Left colon (tissue), 2 donors: ENCODE measurements at regions of chr1 and their contacts with region 1.

Region 1: GRCh38 chr1:223142795-223143536 is at the start of gene TLR5:
- DNase-seq: peak; percentile 87 to 93
- ATAC-seq: peak; percentile 96
- total RNA-seq, gene TLR5: 1.3 to 3.5 TPM

Region 2: DNA sequence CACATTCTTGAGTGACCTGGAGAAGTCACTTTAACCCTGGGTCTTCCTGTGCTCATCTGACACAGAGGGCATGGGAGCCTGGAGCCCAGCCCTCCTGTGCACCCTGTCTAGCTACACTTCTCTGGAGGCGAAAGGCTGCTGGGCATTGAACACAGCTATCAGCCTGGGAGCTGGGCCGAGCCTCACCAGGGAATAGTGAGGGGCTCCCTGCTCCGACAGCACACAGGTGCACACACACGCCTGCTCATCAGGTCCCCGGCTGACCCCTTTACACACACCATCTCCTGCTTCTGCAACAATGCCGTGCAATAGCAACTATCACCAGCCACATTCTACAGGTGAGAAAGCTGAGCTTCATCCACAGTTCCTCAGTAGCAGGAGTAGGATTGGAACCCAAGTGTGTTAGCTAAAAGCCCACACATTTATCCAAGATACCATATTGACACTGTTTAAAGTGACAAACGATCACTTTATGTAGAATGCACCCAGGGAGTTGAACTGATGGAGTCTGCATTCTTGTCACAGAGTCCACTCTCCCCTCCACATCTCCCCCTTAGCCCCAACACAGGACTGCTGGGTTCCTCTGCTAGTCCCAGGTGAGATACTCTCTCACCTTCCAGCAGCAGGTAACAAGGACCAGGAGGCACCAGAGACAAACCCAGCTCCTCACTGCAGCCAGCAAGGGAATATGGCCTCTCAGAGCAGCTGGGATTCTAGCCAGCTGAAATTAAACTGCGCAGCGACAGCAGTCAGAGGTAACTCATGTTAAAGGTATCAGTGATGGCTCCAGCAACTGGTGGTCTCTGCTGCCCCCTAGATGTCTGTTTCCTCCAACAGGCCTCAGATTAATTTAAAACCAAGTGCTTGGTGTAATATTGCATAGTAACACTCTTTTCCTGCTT is 540.9 kb after region 1 on chr1:
- intact Hi-C with region 1: loop called in 1 of 2 experiments (anchors 10 kb)
- DNase-seq: peak in 1 of 2 donors; percentile 79
- ATAC-seq: peak; percentile 88